ENCODE measurements at regions of chr15 and their contacts with region 1.

Region 1: DNA sequence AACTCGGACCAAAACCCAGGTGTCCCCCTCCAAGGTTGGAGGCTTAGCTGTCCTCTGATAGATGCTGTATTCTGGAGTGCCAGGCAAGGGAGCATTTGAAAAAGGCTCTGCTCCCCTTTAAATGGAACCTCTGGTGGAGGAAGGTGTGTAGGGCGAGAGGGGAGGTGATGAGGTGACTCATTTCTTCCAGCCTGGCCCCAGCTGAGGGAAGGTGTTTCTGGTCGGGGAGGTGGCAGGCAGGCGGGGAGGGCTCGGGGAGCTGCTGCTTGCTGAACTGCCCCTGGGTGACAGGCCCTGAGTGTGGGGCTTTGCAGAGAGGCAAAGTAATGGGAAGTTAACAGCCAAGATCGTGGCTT is 18.8 kb downstream of the PSTPIP1 start:
- DNase-seq: peak; percentile 79
- H3K4me3 Mint-ChIP-seq: peak overlapping the region; percentile 70
- H3K27ac Mint-ChIP-seq: peak overlapping the region; percentile 92
- H3K4me1 Mint-ChIP-seq: peaks cover 93% of the 10 kb centered on the region
- H3K27me3 Mint-ChIP-seq: no peaks in the 10 kb centered on the region

Region 2: DNA sequence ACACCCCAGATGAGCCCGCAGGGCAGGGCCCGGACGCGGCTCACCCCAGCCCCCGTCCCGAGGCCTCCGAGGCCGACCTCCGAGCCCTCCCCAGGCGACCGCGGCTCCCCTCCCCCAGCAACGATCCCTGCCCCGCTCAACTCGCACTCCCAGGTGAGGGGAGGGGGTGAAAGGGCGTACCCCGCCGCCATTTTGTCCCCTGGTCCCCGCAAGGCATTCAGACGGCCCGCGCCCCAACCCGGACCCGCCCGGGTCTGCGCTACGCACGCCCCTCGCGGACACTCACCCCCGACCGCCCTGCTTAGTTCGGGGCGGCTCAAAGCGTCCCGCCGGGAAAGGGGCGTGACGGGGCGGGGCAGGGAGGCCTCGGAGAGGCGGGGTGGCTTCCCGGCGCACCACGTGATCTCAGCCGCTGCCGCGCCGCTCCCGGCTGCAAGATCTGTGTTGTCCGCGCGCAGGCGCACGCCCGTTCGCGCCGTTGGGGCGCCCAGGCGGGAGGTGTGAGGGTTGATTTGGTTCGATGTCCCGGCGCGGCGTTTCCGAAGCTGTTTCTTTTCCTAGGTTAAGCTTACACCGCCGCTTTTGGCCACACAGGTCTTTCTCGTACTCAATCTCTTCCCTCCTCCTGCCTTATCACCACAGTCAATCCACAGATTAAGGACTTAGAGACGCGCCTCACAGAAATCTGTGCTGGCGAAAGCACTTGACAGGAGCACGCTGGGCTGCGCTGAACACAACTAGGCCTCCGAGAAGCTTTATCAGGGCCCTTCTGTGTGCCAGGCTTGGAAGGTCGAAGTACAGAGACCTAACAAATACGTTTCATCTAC is 108.5 kb before region 1 on chr15 and contains the start of gene SCAPER:
- intact Hi-C with region 1: loop called (anchors 5 kb)
- DNase-seq: peak; percentile 88
- H3K4me3 Mint-ChIP-seq: peak within 1 kb of the TSS; percentile 91
- H3K27ac Mint-ChIP-seq: peak within 1 kb of the TSS; percentile 93
- H3K4me1 Mint-ChIP-seq: peaks cover 36% of the 10 kb centered on the region
- H3K27me3 Mint-ChIP-seq: peaks cover 4% of the 10 kb centered on the region
- total RNA-seq, gene SCAPER: 21.5 and 23.5 TPM in 2 replicates

Region 3: DNA sequence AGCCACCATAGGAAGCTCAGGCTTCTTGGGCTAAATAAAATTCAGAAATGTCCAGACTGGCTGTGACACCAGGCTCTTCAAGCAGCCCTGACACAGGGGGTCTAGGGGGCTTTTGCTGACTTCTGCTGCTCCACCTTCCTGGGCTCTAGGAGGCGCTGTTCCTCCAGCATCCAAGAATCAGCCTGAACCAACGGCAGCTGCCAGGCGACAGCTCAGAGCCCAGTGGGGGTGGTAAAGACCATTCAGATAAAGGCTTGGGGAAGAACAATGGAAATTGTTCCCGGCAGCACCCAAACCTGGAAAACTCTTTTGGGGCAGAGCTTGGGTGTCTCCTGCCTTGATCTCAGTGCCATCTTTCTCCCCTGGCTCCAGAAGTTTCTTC is 40.4 kb before region 1 on chr15:
- intact Hi-C with region 1: loop called (anchors 1 kb)
- DNase-seq: no peak
- H3K4me3 Mint-ChIP-seq: no peak overlapping the region
- H3K27ac Mint-ChIP-seq: no peak overlapping the region
- H3K4me1 Mint-ChIP-seq: peaks cover 36% of the 10 kb centered on the region
- H3K27me3 Mint-ChIP-seq: peaks cover 4% of the 10 kb centered on the region

Region 4: GRCh38 chr15:76994971-76995945 is 18.5 kb before region 1 on chr15 and contains the start of gene PSTPIP1:
- intact Hi-C with region 1: loop called (anchors 1 kb)
- DNase-seq: peak; percentile 64
- H3K4me3 Mint-ChIP-seq: peak within 1 kb of the TSS; percentile 95
- H3K27ac Mint-ChIP-seq: peak within 1 kb of the TSS; percentile 89
- H3K4me1 Mint-ChIP-seq: peaks cover 81% of the 10 kb centered on the region
- H3K27me3 Mint-ChIP-seq: no peaks in the 10 kb centered on the region
- total RNA-seq, gene PSTPIP1: 218 and 226 TPM in 2 replicates

Region 5: DNA sequence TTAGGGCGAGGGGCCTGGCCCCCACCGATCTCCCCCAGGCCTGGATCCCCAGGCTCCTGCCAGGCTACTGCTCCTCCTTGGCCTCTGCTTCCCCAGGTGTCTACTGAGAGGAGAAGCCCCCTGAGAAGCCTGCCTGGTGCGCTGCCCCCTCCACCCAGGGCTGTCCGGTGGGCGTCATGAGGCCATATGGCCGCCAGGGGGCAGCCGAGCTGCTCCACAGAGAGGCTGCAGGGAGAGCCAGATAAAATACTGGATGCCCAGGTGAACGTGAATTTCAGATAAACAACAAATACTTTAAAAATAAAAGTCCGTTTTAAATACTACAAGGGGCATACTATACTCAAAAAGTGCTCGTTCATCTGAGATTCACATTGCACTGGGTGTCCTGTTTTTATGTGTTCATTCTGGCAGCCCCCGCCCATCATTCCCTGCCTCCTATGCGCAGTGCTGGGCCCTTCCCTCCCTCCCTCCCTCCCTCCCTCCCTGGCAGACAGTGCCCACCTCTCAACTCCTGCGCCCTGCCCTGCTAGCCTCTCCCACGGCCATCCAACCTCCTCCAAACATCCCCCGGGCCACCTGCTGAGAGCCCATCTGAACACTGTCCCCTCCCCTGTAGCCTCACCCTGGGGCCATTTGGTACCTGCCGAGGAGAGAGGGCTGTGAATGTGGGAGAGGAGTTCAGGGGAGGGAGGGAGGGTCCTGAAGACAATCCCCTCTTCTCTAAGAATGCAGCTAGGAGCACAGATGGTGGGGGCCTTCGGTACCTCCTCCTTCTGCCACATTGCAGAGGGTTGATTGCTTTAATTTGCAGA is 10.7 kb after region 1 on chr15:
- intact Hi-C with region 1: loop called (anchors 1 kb)
- DNase-seq: peak; percentile 49
- H3K4me3 Mint-ChIP-seq: peak overlapping the region; percentile 33
- H3K27ac Mint-ChIP-seq: peak overlapping the region; percentile 98
- H3K4me1 Mint-ChIP-seq: peaks cover 61% of the 10 kb centered on the region
- H3K27me3 Mint-ChIP-seq: no peaks in the 10 kb centered on the region

Region 6: GRCh38 chr15:77059786-77060361 is 46.1 kb after region 1 on chr15:
- intact Hi-C with region 1: no loop called
- DNase-seq: no peak
- H3K4me3 Mint-ChIP-seq: no peak overlapping the region
- H3K27ac Mint-ChIP-seq: no peak overlapping the region
- H3K4me1 Mint-ChIP-seq: peaks cover 18% of the 10 kb centered on the region
- H3K27me3 Mint-ChIP-seq: no peaks in the 10 kb centered on the region

Region 7: DNA sequence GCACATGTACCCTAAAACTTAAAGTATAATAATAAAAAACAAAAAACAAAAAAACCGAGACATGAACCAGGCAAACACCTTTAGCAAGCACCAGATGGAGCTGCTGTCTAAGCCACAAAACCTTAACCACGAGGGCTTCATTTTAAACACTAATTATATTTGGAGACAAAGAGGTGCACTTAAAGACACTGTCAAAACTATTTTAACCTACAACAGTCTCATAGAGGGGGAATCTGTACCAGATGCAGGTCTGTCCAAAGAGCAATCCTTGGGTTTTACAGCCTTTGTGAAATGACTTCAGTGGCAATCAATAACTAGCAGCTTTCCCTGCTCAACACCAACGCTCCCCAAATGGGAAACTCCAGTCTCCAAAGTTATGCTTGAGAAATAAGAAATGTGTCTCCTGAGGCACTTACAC is 172.8 kb after region 1 on chr15:
- intact Hi-C with region 1: loop called (anchors 5 kb)
- DNase-seq: no peak
- H3K4me3 Mint-ChIP-seq: no peak overlapping the region
- H3K27ac Mint-ChIP-seq: peak overlapping the region; percentile 37
- H3K4me1 Mint-ChIP-seq: peaks cover 69% of the 10 kb centered on the region
- H3K27me3 Mint-ChIP-seq: no peaks in the 10 kb centered on the region